Head of caudate nucleus (tissue), 42 donors: ENCODE measurements at regions of chr5 and their contacts with region 1.

Region 1: DNA sequence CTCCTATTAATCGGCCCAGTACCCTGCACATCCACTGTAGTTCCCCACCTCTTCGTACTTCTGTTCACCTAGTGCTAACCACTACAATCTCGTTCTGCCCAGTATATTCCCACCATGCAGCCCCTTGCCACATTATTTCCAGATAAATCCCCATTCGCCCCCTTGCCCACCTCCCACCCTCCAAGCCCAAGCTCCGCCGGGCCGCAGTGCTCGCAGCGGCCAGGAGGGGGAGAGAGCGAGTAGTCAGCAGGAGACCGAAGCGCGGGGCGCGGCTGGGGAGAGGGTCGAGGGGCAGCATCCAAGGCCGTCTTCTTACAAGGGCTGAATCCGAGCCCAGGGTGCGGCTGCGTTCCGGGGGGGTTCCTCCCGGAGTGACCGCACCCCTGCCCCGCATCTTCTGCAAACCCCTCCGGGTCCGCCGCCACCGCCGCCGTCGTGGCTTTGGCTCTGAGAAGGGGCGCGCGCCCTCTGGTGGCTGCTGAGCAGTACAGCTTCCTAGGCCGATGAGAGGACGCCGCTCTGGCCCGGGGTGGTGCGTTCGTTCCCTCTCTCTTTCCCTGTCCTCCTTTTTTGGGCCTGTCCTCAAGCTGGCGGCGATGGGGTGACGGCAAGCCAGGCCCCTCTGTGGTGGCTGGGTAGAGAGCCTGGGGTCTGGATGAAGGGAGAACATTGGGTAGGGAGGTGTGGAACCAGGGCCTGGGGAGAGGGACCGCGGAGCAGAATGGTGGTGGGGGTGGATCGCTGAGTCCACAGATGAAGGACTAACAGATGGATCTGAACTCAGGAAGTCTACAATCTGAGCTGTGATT is 30.0 kb upstream of the PSD2 start:
- DNase-seq: peak; percentile 59 to 92 (median 84)

Region 2: GRCh38 chr5:139422307-139422893 is 343.2 kb before region 1 on chr5:
- intact Hi-C with region 1: loop called (anchors 10 kb)
- DNase-seq: peak in 23 of 42 donors; percentile 17 to 82 (median 55)

Region 3: DNA sequence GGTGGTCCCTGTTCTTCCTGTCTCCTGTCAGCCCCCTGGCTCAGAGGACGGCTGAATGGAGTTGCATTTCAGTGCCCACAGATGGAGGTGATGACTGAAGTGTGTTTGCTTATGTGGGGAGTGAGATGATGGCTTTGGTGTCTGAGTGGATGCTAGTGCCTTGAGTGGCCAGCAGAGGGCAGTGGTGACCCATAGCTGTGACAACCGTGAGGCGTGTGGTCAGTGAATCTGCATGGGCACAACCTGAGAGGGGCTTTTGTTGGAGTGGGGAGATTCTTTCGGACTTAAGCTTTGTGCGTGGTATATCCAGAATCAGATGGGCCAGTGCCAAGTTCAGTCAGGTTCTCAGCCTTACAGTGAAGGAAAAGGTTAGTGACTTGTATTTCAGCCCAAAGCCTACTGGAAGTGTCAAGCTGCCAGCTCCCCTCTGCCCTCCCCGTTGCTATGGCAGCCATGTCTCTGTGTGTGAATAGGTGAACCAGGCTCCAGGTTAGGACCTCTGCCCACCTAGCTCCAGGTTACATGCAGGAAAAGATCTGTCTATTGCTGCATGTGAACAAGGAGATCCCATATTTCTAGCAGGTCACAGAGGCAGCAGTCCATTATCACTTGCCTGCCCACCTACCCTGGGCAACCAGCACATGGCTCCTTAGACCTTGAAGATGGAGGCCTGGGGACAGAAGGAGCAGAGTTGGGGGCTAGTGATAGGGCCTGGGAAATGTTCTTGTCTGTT is 132.2 kb before region 1 on chr5:
- intact Hi-C with region 1: loop called (anchors 1 kb)
- DNase-seq: peak; percentile 45 to 92 (median 80)

Region 4: GRCh38 chr5:139696894-139697658 is 68.5 kb before region 1 on chr5:
- intact Hi-C with region 1: loop called (anchors 5 kb)
- DNase-seq: peak in 36 of 42 donors; percentile 46 to 91 (median 66)

Region 5: DNA sequence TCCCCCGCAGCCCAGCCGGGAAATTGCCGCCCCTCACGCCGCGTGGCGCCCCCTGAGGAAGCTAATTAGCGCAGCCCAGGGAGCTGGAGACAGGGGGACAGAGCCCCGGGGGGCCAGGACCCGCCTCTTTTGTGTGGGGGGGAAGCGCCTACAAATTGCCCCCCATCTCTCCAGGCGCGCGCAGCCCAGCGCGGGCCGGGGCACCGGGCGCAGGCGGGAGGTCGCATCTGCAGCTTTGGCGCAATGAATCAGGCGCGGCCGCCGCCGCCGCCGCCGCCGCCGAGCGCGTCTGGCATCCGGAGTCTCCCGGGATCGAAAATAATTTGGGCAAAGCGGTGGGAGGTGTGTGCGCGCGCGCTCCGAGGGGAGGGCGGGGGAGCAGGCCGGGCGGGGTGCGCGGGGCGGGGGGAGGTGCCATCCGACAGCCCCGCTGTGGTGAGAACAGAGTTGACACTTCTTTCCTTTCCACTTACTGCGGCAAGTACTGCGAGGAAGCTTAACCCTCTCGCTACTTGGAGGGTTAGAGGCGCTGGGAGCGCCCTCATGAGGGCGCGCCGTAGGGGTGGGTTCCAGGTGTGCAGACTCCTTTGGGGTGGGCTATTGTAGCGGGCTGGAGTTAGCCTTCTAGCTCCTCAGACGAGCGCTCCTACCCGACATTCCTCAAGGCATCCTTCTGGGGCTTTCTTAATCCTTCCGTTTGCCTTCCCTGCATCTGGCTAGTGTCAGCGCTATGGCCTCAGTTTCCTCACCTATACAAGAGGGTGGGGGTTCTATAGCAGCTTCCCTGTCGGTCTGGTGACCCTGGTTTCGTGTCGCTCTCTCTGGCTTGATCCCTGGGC is 54.3 kb before region 1 on chr5:
- intact Hi-C with region 1: loop called (anchors 5 kb)
- DNase-seq: peak in 41 of 42 donors; percentile 42 to 91 (median 77)

Region 6: GRCh38 chr5:140084541-140084940 is 318.9 kb after region 1 on chr5:
- intact Hi-C with region 1: no loop called
- DNase-seq: peak in 26 of 42 donors; percentile 1 to 53 (median 19)